ENCODE measurements at regions of chr11 and their contacts with region 1.

Region 1: GRCh38 chr11:76799066-76799804 is 16.1 kb downstream of the TSKU start:
- DNase-seq: peak; percentile 82
- ATAC-seq: peak; percentile 95
- H3K4me3 Mint-ChIP-seq: no peak overlapping the region
- H3K27ac Mint-ChIP-seq: no peak overlapping the region
- H3K4me1 Mint-ChIP-seq: peaks cover 18% of the 10 kb centered on the region
- H3K27me3 Mint-ChIP-seq: peaks cover 12% of the 10 kb centered on the region

Region 2: DNA sequence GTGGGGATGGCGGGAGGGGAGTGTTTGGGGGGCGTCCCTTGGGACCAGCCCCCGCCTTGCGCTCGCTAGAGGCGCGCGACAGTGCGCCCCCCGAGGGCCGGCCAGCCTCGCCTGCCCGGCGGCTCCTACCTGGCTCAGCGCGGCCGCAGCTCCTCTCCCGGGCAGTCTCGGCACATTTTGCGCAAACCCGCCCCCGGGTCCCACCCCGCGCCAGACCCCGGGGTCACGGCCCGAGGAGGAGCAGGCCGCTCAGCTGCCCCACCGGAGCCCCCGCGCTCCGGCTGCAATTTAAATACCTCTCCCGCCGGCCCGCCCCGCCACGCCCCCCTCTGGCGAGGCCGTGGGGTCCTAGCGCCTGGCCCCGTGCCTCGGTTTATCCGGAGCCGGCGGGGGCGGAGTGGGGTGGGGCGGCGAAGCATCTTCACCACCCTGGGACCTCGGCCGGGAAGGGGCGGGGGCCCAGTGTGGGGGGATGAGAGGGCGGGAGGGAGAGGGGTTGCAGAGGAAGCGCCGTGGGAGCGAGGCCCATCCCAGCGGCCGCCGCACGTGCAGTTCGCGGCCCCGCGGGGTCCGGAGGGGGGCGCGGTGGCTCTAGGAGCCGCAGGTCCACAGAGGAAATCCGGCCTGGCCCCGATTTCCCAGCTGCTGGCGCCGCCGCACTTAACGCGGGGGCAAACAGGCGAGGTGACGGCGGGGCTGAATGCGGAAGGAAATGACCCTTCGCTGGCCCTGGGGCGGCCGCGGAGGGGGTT is 128.6 kb before region 1 on chr11 and contains the start of gene LRRC32:
- CTCF ChIA-PET with region 1: no interaction called
- DNase-seq: no peak
- ATAC-seq: peak; percentile 12
- H3K4me3 Mint-ChIP-seq: peak within 1 kb of the TSS; percentile 40
- H3K27ac Mint-ChIP-seq: no peak within 1 kb of the TSS
- H3K4me1 Mint-ChIP-seq: peaks cover 29% of the 10 kb centered on the region
- H3K27me3 Mint-ChIP-seq: peaks cover 34% of the 10 kb centered on the region
- total RNA-seq, gene LRRC32: 0.32 to 4.7 TPM

Region 3: GRCh38 chr11:76721755-76722677 is 77.2 kb before region 1 on chr11:
- CTCF ChIA-PET with region 1: interaction called, 81 read pairs
- DNase-seq: peak; percentile 81
- ATAC-seq: peak; percentile 98
- H3K4me3 Mint-ChIP-seq: no peak overlapping the region
- H3K27ac Mint-ChIP-seq: no peak overlapping the region
- H3K4me1 Mint-ChIP-seq: peaks cover 7% of the 10 kb centered on the region
- H3K27me3 Mint-ChIP-seq: peaks cover 40% of the 10 kb centered on the region

Region 4: DNA sequence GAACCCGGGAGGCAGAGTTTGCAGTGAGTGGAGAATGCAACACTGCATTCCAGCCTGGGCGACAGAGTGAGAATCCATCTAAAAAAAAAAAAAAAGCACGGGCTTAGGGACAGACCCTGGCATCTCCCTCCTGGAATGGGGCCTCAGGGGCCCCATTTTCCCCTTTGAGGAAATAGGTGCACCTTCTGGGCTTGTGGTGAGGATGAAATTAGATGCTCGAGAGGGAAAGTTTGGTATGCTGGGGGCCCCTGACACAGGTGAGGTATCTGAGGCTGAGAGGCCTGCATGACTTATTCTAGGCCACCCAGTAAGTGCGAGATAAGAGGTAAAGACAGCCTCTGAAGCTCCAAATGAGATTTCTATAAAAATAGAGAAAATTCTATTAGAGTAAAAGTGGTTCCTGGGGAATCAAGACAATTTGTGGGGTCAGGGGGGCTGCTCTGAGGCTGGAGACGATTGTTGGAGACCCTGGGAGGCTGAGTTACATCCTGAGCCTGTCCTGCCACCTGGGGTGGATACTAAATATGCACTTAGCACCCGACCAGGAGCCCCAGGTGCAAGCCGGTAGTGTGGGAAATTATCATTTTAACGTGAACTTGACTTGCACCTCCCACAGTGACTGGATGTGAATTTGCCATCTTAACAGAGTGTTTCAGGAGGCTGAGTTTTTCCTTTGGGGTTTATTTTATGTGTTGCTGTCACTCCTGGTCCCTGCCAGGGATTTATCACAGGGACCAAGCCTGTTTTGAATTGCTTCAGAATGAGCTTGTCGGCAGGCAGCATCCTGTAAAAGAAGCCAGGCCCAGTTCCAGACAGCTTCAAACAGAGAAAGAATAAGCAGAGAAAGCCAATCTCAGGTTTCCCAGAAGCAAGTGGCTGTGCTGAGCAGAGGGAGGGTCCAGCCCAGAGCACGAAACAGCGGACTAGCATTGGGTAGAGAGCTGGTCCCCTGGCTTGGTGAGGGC is 64.5 kb before region 1 on chr11:
- CTCF ChIA-PET with region 1: interaction called, 69 read pairs
- DNase-seq: no peak
- ATAC-seq: no peak
- H3K4me3 Mint-ChIP-seq: no peak overlapping the region
- H3K27ac Mint-ChIP-seq: no peak overlapping the region
- H3K4me1 Mint-ChIP-seq: peaks cover 7% of the 10 kb centered on the region
- H3K27me3 Mint-ChIP-seq: peaks cover 6% of the 10 kb centered on the region

Region 5: DNA sequence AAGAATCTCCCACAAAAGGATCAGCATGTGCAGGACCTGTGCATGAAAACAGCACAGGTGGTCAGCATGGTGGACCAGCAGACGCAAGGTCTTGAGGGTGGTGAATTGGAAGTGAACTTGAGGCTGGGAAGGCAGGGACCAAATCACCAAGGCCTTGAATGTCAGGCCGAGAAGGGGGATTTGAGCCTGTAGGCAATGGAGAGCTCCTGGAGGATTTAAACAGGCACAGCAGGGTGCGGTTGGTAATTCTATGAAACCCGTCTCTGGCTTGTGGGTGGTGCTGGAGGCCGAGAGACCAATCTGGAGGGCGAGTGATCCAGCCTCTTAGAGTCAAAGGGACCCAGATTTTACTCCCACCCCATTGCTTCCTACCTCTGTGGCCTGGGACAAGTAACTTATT is 13.7 kb before region 1 on chr11:
- CTCF ChIA-PET with region 1: interaction called, 10 read pairs
- DNase-seq: no peak
- ATAC-seq: no peak
- H3K4me3 Mint-ChIP-seq: no peak overlapping the region
- H3K27ac Mint-ChIP-seq: no peak overlapping the region
- H3K4me1 Mint-ChIP-seq: peaks cover 16% of the 10 kb centered on the region
- H3K27me3 Mint-ChIP-seq: peaks cover 47% of the 10 kb centered on the region

Region 6: DNA sequence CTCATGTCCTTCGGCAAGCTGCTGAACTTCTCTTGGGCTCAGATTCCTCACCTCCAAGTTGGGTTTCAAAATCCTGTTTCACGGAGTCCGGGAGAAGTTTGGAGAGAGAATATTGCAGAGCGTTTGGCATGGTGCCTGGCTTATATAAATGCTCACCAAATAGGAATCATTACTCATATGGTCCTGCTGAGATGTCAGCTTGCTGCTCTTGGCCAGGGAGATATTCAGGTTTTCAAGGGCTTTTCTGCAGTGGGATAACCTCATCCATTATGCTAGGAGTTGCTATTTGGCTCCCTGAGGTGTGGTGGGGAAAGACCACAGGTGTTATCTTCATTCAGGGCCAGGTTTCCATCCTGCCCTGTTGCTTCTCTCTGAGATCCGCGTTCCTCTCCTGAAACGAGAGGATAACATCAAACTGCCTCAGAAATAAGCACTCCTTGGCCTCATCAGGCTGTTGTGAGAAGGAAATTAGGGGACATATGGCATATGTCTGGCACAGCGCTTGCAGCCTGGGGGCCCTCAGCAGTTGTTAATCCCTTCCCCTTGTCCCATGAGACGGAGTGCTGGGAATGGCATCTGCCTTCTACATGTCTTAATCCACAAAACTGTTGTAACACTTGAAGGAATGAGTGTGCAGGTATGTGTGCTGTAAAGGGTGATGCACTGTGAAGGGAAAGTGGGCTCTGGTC is 31.5 kb after region 1 on chr11:
- CTCF ChIA-PET with region 1: no interaction called
- DNase-seq: no peak
- ATAC-seq: no peak
- H3K4me3 Mint-ChIP-seq: no peak overlapping the region
- H3K27ac Mint-ChIP-seq: no peak overlapping the region
- H3K4me1 Mint-ChIP-seq: peaks cover 5% of the 10 kb centered on the region
- H3K27me3 Mint-ChIP-seq: peaks cover 5% of the 10 kb centered on the region

Region 7: DNA sequence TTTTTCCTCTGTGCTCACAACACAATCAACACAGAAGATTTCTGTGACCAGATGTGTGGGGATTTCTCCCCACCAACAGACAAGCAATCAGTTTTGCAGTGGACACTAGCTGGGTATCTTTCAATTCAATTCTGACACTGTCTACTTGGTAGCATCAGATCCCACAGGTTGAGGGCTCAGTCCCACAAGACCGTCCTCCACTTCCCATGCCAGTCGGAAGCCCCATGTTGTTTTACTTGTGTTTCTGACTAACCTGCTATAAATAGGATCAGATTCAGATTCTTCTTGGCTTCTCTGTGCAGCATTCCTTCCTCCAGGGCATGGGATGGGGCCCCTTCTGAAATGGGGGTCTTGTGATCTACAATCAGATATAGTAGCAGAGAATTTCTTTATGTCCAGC is 81.1 kb after region 1 on chr11:
- CTCF ChIA-PET with region 1: no interaction called
- DNase-seq: no peak
- ATAC-seq: no peak
- H3K4me3 Mint-ChIP-seq: no peak overlapping the region
- H3K27ac Mint-ChIP-seq: no peak overlapping the region
- H3K4me1 Mint-ChIP-seq: peaks cover 5% of the 10 kb centered on the region
- H3K27me3 Mint-ChIP-seq: no peaks in the 10 kb centered on the region